ENCODE measurements at regions of chr19 and their contacts with region 1.

Region 1: DNA sequence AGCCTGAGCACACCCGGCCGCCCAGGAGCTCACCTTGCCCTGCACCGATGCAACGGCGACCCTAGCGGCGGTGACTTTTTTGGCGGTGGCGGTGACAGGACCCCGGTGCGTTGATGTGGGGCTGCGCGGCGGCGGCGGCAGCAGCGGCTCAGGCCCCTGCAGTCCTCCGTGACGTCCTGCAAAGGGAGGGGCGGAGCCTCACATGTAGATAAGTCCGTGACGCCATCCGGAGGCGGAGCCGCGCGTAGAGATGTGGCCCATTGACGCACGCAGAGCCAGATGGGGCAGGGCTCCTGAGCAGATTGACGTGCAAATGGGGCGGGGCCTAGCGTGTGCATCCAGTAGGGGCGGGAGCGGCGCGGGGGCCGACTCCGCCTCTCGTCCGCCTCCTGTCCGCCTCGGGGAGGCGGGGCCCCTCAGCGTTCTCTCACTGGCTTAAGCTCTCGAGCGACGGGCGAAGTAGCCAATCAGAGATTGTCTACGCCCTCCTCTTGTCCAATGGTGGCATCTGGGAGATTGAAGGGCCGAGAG is at the start of gene RAB3A:
- DNase-seq: peak; percentile 100
- H3K4me3 ChIP-seq: peak within 1 kb of the TSS; percentile 64 to 75 (median 73)
- H3K27ac ChIP-seq: peak within 1 kb of the TSS; percentile 95 to 98 (median 95)
- H3K4me1 ChIP-seq: peaks cover 0 to 37% (median 32%) of the 10 kb centered on the region in 4 donors
- H3K27me3 ChIP-seq: no peaks in the 10 kb centered on the region
- CTCF ChIP-seq: no peak
- EP300 ChIP-seq: peak in 2 of 4 donors; percentile 48 to 86
- POLR2A ChIP-seq: peak; percentile 83 to 87
- total RNA-seq, gene RAB3A: 0.66 to 2.9 (median 2.2) TPM

Region 2: GRCh38 chr19:17565611-17566010 is 638.3 kb before region 1 on chr19:
- intact Hi-C with region 1: no loop called
- DNase-seq: no peak
- H3K4me3 ChIP-seq: no peak overlapping the region
- H3K27ac ChIP-seq: no peak overlapping the region
- H3K4me1 ChIP-seq: no peaks in the 10 kb centered on the region
- H3K27me3 ChIP-seq: no peaks in the 10 kb centered on the region
- CTCF ChIP-seq: no peak
- EP300 ChIP-seq: no peak
- POLR2A ChIP-seq: no peak

Region 3: DNA sequence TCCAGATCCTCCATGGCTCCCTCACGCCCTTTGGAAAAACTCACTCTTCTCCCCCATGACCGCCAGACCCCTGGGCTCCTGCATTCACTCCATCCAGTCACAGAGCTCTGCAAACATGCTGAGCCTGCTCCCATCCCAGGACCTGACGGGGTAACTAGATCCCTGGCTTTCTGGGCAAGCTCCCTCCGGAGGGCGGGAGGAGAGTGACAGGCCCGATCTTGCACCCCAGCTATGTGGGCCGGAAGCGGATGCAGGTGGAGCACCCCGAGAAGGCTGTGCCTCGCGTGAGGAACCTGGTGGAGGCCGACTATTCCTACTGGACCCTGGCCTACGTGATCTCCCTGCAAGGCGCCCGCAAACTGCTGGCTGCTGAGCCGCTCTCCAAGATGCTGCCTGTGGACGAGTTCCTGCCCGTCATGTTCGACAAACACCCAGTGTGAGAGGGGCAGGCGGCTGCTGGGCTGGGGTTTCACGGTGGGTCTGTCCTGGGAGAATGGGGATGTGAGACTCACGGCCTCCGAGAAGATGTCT is 623.4 kb before region 1 on chr19:
- intact Hi-C with region 1: no loop called
- DNase-seq: no peak
- H3K4me3 ChIP-seq: no peak overlapping the region
- H3K27ac ChIP-seq: no peak overlapping the region
- H3K4me1 ChIP-seq: no peaks in the 10 kb centered on the region
- H3K27me3 ChIP-seq: no peaks in the 10 kb centered on the region
- CTCF ChIP-seq: no peak
- EP300 ChIP-seq: no peak
- POLR2A ChIP-seq: no peak

Region 4: DNA sequence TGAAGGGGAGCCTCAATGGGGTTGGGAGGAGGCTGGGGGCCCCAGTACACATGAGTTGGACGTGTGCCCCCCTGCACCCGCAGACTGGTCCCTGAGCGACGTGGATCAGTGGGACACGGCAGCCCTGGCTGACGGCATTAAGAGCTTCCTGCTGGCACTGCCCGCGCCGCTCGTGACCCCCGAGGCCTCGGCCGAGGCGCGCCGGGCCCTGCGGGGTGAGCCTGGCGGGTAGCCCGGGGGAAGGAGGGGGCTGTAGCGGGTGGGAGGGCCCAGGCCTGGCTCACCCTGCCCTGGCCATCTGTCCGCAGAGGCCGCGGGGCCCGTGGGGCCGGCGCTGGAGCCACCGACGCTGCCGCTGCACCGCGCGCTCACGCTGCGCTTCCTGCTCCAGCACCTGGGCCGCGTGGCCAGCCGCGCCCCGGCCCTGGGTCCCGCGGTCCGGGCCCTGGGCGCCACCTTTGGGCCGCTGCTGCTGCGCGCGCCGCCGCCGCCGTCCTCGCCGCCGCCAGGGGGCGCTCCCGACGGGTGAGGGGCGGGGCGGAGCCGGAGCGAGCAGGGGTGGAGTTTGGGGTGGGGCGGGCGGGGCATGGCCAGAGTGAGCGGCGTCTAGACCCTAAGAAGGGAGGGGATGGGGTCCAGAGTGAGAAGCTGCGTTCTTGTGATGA is 42.8 kb before region 1 on chr19:
- intact Hi-C with region 1: no loop called
- DNase-seq: peak; percentile 83
- H3K4me3 ChIP-seq: peak overlapping the region in 3 of 4 donors; percentile 40 to 52 (median 50)
- H3K27ac ChIP-seq: peak overlapping the region; percentile 71 to 77 (median 74)
- H3K4me1 ChIP-seq: peaks cover 0 to 36% (median 35%) of the 10 kb centered on the region in 4 donors
- H3K27me3 ChIP-seq: no peaks in the 10 kb centered on the region
- CTCF ChIP-seq: peak in 1 of 4 experiments; percentile 61
- EP300 ChIP-seq: no peak
- POLR2A ChIP-seq: no peak

Region 5: GRCh38 chr19:18192673-18193387 is 11.1 kb before region 1 on chr19 and contains the start of gene MPV17L2:
- intact Hi-C with region 1: loop called (anchors 1 kb)
- DNase-seq: peak; percentile 100
- H3K4me3 ChIP-seq: peak within 1 kb of the TSS; percentile 75 to 91 (median 84)
- H3K27ac ChIP-seq: peak within 1 kb of the TSS; percentile 95 to 99 (median 98)
- H3K4me1 ChIP-seq: peaks cover 0 to 31% (median 24%) of the 10 kb centered on the region in 4 donors
- H3K27me3 ChIP-seq: no peaks in the 10 kb centered on the region
- CTCF ChIP-seq: no peak
- EP300 ChIP-seq: no peak
- POLR2A ChIP-seq: peak; percentile 90 to 93
- total RNA-seq, gene MPV17L2: 15.8 to 37.3 (median 26.2) TPM

Region 6: DNA sequence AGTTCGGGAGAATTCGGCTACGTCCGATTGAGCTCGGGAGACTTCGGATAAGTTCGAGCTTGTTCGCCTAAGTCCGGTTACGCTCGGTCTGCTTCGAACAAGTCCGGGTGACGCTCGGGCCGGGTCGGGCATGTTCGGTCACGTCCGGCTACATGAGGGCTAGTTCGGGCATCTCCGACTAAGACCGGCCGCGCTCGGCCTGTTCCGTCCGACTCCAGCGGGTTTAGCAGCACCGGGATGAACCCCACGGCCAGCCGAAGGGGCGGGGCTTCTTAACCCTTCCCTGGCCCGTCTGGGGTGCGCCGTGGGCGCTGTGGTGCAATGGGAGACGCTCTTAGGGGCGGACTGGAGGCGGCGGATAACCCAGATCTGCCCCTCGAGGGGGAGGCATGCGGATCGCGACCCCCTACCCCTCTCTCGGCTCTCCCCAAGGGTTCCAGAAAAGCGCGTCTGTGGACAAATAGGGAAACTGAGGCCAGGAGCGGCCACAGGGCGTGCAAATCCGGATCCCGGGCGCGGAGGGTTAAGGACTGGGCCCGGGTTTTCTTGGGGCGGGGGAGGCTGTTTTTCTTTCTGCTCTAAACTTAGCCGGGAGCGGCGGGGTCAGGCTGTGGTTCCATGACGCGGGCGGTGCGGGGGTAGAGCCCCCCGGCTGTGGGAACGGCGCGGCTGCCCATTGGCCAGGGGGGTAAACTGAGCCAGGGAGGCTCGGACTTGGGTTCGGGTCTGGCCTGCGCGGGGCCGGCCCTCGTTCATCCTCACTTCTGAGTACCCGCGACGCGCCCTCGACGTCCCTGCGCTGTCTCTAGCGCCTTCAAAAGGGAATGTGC is 20.8 kb after region 1 on chr19:
- intact Hi-C with region 1: loop called (anchors 1 kb)
- DNase-seq: peak; percentile 100
- H3K4me3 ChIP-seq: peak overlapping the region; percentile 21 to 49 (median 38)
- H3K27ac ChIP-seq: peak overlapping the region; percentile 4 to 72 (median 44)
- H3K4me1 ChIP-seq: peaks cover 0 to 44% (median 36%) of the 10 kb centered on the region in 4 donors
- H3K27me3 ChIP-seq: peaks cover 0 to 53% (median 31%) of the 10 kb centered on the region in 3 donors
- CTCF ChIP-seq: no peak
- EP300 ChIP-seq: no peak
- POLR2A ChIP-seq: no peak

Region 7: GRCh38 chr19:18251587-18252369 is 47.9 kb after region 1 on chr19:
- intact Hi-C with region 1: loop called (anchors 1 kb)
- DNase-seq: peak; percentile 85
- H3K4me3 ChIP-seq: no peak overlapping the region
- H3K27ac ChIP-seq: no peak overlapping the region
- H3K4me1 ChIP-seq: peaks cover 0 to 5% (median 2%) of the 10 kb centered on the region in 4 donors
- H3K27me3 ChIP-seq: peaks cover 0 to 13% (median 5%) of the 10 kb centered on the region in 3 donors
- CTCF ChIP-seq: peak; percentile 90 to 99 (median 96)
- EP300 ChIP-seq: no peak
- POLR2A ChIP-seq: no peak

Region 8: GRCh38 chr19:18322759-18323460 is 119.0 kb after region 1 on chr19 and contains the start of gene LSM4:
- intact Hi-C with region 1: loop called (anchors 2 kb)
- DNase-seq: peak; percentile 99
- H3K4me3 ChIP-seq: peak within 1 kb of the TSS; percentile 61 to 91 (median 84)
- H3K27ac ChIP-seq: peak within 1 kb of the TSS; percentile 90 to 93 (median 92)
- H3K4me1 ChIP-seq: peaks cover 0 to 45% (median 37%) of the 10 kb centered on the region in 4 donors
- H3K27me3 ChIP-seq: no peaks in the 10 kb centered on the region
- CTCF ChIP-seq: no peak
- EP300 ChIP-seq: no peak
- POLR2A ChIP-seq: peak; percentile 53 to 75
- total RNA-seq, gene LSM4: 89.1 to 144 (median 119) TPM

Region 9: GRCh38 chr19:18419195-18419698 is 215.3 kb after region 1 on chr19 and contains the start of gene SSBP4:
- intact Hi-C with region 1: loop called (anchors 5 kb)
- DNase-seq: no peak
- H3K4me3 ChIP-seq: peak within 1 kb of the TSS; percentile 41 to 74 (median 64)
- H3K27ac ChIP-seq: peak within 1 kb of the TSS; percentile 82 to 88 (median 86)
- H3K4me1 ChIP-seq: peaks cover 0 to 79% (median 69%) of the 10 kb centered on the region in 4 donors
- H3K27me3 ChIP-seq: peaks cover 0 to 29% (median 3%) of the 10 kb centered on the region in 3 donors
- CTCF ChIP-seq: peak in 1 of 4 experiments; percentile 14
- EP300 ChIP-seq: no peak
- POLR2A ChIP-seq: no peak
- total RNA-seq, gene SSBP4: 52.4 to 71.4 (median 58.0) TPM

Measured in sigmoid colon (tissue), 7 donors.